Lower lobe of right lung (tissue), 2 donors: ENCODE measurements at regions of chr10 and their contacts with region 1.

Region 1: GRCh38 chr10:96129387-96130325 is at the start of gene ZNF518A:
- DNase-seq: peak; percentile 97
- ATAC-seq: peak; percentile 99
- H3K4me3 ChIP-seq: peak within 1 kb of the TSS; percentile 87
- H3K27ac ChIP-seq: peak within 1 kb of the TSS; percentile 100
- H3K4me1 ChIP-seq: peaks cover 16% of the 10 kb centered on the region
- H3K27me3 ChIP-seq: peaks cover 31% of the 10 kb centered on the region
- CTCF ChIP-seq: no peak
- total RNA-seq, gene ZNF518A: 23.3 TPM

Region 2: DNA sequence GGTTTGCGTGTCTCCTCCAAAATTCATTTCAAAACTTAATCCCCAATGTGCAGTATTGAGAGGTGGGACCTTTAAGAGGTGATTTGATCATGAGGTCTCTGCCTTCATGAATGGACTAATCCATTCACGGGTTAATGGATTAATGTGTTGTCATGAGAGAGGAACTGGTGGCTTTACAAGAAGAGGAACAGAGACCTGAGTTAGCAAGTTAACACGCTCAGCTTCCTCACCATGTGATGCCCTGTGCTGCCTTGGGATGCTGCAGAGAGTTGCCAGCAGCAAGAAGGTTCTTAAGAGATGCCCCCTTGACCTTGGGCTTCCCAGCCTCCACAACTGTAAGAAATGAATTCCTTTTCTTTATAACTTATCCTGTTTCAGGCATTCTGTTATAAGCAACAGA is 432.2 kb before region 1 on chr10:
- intact Hi-C with region 1: no loop called
- DNase-seq: peak; percentile 53
- ATAC-seq: no peak
- H3K4me3 ChIP-seq: no peak overlapping the region
- H3K27ac ChIP-seq: no peak overlapping the region
- H3K4me1 ChIP-seq: peaks cover 8% of the 10 kb centered on the region
- H3K27me3 ChIP-seq: no peaks in the 10 kb centered on the region
- CTCF ChIP-seq: no peak

Region 3: GRCh38 chr10:96089670-96090462 is 39.8 kb before region 1 on chr10:
- intact Hi-C with region 1: loop called (anchors 5 kb)
- DNase-seq: peak; percentile 96
- ATAC-seq: peak; percentile 99
- H3K4me3 ChIP-seq: peak overlapping the region; percentile 68
- H3K27ac ChIP-seq: peak overlapping the region; percentile 97
- H3K4me1 ChIP-seq: no peaks in the 10 kb centered on the region
- H3K27me3 ChIP-seq: peaks cover 28% of the 10 kb centered on the region
- CTCF ChIP-seq: no peak